ENCODE measurements at regions of chr2 and their contacts with region 1.

Region 1: GRCh38 chr2:85504778-85505323 is 34.1 kb upstream of the MAT2A start:
- DNase-seq: peak in 2 of 5 donors; percentile 61 to 76
- ATAC-seq: peak in 3 of 4 donors; percentile 72 to 85 (median 85)
- H3K4me3 ChIP-seq: no peak overlapping the region
- H3K27ac ChIP-seq: peak overlapping the region in 11 of 12 donors; percentile 2 to 66 (median 52)
- H3K4me1 ChIP-seq: peaks cover 0 to 66% (median 39%) of the 10 kb centered on the region in 12 donors
- H3K27me3 ChIP-seq: no peaks in the 10 kb centered on the region
- CTCF ChIP-seq: no peak
- POLR2A ChIP-seq: no peak

Region 2: DNA sequence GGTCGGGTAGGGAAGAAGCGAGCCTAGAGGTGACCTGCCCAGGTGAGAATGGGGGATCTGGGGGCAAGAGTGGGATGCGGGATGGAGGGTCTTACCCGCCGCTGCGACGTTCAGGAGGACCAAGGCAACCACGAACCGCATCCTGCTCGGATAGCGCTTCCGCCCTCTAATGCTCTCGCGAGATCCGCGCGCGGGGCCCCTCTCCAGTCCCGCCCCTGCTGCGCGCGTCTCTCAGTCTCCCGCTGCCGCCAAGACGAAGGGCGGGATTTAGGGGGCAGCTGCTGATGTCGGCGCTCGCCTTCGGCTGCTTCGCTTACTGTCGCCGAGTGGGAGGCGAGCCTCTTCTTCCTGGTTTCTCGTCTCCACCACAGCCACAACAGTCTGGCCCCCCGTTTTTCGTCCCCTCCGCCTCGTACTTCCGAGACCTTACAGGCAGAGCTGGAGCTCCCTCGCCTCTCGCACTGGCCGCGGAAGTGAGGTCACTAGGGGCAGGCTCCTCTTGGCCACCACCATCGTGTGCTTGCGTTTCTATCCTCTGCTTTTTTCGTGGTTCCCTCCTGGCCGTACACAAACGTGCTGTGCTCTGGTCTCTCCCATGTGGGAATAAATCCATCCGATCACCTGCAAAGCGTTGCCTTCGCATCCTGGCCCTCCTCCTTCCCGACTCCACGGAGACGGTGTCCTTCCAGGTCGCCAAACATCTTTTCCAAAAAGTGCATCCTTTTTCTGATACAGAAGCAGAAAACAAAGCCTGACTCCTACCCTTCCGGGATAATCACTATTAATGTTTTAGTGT is 176.8 kb before region 1 on chr2 and contains the start of gene TGOLN2:
- intact Hi-C with region 1: no loop called
- DNase-seq: peak; percentile 95 to 97 (median 95)
- ATAC-seq: peak; percentile 97 to 98 (median 98)
- H3K4me3 ChIP-seq: peak within 1 kb of the TSS; percentile 45 to 88 (median 76)
- H3K27ac ChIP-seq: peak within 1 kb of the TSS; percentile 94 to 99 (median 98)
- H3K4me1 ChIP-seq: peaks cover 2 to 52% (median 42%) of the 10 kb centered on the region in 12 donors
- H3K27me3 ChIP-seq: no peaks in the 10 kb centered on the region
- CTCF ChIP-seq: peak in 3 of 12 donors; percentile 6 to 43 (median 30)
- POLR2A ChIP-seq: peak; percentile 42 to 97
- total RNA-seq, gene TGOLN2: 70.7 to 130 (median 83.5) TPM

Region 3: GRCh38 chr2:85423525-85423924 is 81.3 kb before region 1 on chr2:
- intact Hi-C with region 1: no loop called
- DNase-seq: no peak
- ATAC-seq: no peak
- H3K4me3 ChIP-seq: no peak overlapping the region
- H3K27ac ChIP-seq: no peak overlapping the region
- H3K4me1 ChIP-seq: peaks cover 5 to 44% (median 22%) of the 10 kb centered on the region in 12 donors
- H3K27me3 ChIP-seq: no peaks in the 10 kb centered on the region
- CTCF ChIP-seq: no peak
- POLR2A ChIP-seq: no peak

Region 4: DNA sequence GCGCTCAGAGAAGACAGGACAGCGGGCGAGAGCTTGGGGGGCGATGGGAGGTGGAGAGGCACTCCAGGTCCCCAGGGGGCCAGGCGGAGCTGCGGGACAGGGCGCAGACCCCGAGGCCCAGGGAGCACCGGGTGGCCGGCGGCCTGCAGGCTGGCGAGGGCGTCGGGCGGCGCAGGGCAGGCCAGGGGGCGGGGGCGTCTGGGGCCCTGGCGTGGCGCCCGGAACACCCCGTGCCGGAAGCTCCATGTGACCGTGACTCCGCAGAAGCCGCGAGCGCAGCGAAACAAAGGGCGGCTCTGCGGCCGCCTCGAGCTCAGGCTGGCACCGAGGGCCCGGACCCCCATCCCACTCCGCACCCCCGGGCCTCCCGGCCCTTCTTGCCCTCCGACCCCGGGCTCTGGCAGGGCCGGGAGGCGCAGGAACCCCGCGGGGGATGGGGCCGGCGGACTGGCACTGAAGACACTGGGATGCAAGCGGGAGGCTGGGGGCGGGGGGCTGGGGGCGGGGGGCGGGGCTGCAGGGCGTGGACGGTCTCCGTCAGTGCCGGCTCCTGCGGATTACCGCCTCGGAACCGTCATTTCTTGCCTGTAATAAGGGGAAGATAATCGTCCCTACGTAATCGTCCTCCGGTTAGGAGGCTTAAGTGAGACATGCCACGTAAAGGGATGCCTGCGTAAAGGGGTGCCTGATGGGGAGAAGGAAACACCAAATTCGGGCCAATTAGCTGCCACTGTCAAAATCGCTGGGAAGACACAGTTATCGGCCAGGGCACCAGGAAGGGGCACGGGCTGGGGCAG is 67.2 kb before region 1 on chr2:
- intact Hi-C with region 1: loop called in 1 of 10 experiments (anchors 2 kb)
- DNase-seq: peak; percentile 88 to 95 (median 92)
- ATAC-seq: peak; percentile 59 to 83 (median 80)
- H3K4me3 ChIP-seq: peak overlapping the region in 11 of 12 donors; percentile 10 to 59 (median 54)
- H3K27ac ChIP-seq: peak overlapping the region; percentile 91 to 99 (median 95)
- H3K4me1 ChIP-seq: peaks cover 16 to 64% (median 39%) of the 10 kb centered on the region in 12 donors
- H3K27me3 ChIP-seq: no peaks in the 10 kb centered on the region
- CTCF ChIP-seq: peak in 1 of 12 donors; percentile 7
- POLR2A ChIP-seq: peak; percentile 25 to 88

Region 5: GRCh38 chr2:85453571-85453970 is 51.3 kb before region 1 on chr2:
- intact Hi-C with region 1: loop called in 1 of 10 experiments (anchors 5 kb)
- DNase-seq: no peak
- ATAC-seq: no peak
- H3K4me3 ChIP-seq: no peak overlapping the region
- H3K27ac ChIP-seq: no peak overlapping the region
- H3K4me1 ChIP-seq: no peaks in the 10 kb centered on the region
- H3K27me3 ChIP-seq: no peaks in the 10 kb centered on the region
- CTCF ChIP-seq: no peak
- POLR2A ChIP-seq: no peak

Region 6: GRCh38 chr2:85538486-85539360 is 33.9 kb after region 1 on chr2 and contains the start of gene MAT2A:
- intact Hi-C with region 1: loop called in 5 of 10 experiments (anchors 2 to 5 kb)
- DNase-seq: peak; percentile 95 to 96 (median 96)
- ATAC-seq: peak; percentile 87 to 90 (median 89)
- H3K4me3 ChIP-seq: peak within 1 kb of the TSS; percentile 59 to 98 (median 90)
- H3K27ac ChIP-seq: peak within 1 kb of the TSS; percentile 94 to 100 (median 99)
- H3K4me1 ChIP-seq: peaks cover 0 to 55% (median 38%) of the 10 kb centered on the region in 12 donors
- H3K27me3 ChIP-seq: no peaks in the 10 kb centered on the region
- CTCF ChIP-seq: peak; percentile 55 to 91 (median 80)
- POLR2A ChIP-seq: peak in 1 of 2 donors; percentile 98
- total RNA-seq, gene MAT2A: 66.0 to 218 (median 128) TPM

Measured in heart left ventricle (tissue), 16 donors.